ENCODE measurements at regions of chr19 and their contacts with region 1.

Region 1: GRCh38 chr19:50657712-50658440 is 8.6 kb downstream of the C19orf81 start:
- DNase-seq: peak; percentile 98 to 100 (median 100)
- H3K4me3 ChIP-seq: peak overlapping the region; percentile 50 to 85 (median 70)
- H3K27ac ChIP-seq: peak overlapping the region in 58 of 59 donors; percentile 26 to 95 (median 86)
- H3K27me3 ChIP-seq: no peaks in the 10 kb centered on the region
- CTCF ChIP-seq: peak in 5 of 56 donors; percentile 4 to 29 (median 20)

Region 2: DNA sequence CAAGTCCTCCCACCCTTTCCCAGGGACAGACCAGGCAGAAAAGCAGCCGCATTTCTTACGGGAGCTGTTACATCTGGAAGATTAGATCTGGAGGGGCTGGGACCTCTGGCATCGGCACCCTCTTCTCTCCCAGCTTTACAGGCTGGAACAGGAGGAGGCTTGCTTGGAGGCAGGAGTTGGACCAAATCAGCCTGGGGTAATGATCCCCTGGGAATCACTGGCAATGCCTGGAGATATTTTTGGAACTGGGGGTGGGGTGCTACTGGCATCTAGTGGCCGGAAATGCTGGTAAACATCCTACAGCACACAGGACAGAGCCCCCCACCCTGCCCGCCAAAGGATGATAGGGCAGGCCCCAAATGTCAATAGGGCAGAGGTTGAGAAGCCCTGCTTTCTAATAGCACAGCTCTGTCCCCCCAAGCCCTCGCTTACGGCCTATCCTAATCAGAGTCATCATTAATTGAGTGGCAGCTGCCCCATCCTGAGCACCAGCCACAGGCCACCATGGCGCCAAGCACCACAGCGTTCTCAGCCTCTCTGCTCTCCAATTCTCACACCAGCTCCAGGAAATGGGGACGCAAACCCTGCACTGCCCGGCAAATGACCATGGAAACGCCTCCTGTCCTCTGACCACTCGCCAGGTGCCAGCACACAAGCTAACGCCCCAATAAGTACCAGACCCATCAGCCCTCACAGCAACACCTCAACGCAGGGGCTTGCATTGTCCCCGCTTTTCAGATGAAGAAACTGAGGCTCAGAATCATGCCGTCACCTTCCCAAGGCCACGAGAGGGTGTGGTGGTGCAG is 110.3 kb before region 1 on chr19:
- intact Hi-C with region 1: loop called in 1 of 2 experiments (anchors 5 kb)
- DNase-seq: peak in 1 of 10 donors; percentile 58
- H3K4me3 ChIP-seq: peak overlapping the region; percentile 23 to 87 (median 71)
- H3K27ac ChIP-seq: peak overlapping the region; percentile 65 to 99 (median 94)
- H3K27me3 ChIP-seq: no peaks in the 10 kb centered on the region
- CTCF ChIP-seq: peak in 48 of 56 donors; percentile 10 to 63 (median 38)

Region 3: GRCh38 chr19:50556282-50557008 is 101.4 kb before region 1 on chr19:
- intact Hi-C with region 1: loop called in 1 of 2 experiments (anchors 5 kb)
- DNase-seq: peak; percentile 85 to 91 (median 87)
- H3K4me3 ChIP-seq: peak overlapping the region; percentile 33 to 77 (median 60)
- H3K27ac ChIP-seq: peak overlapping the region in 55 of 59 donors; percentile 10 to 87 (median 75)
- H3K27me3 ChIP-seq: no peaks in the 10 kb centered on the region
- CTCF ChIP-seq: peak; percentile 70 to 98 (median 87)

Region 4: DNA sequence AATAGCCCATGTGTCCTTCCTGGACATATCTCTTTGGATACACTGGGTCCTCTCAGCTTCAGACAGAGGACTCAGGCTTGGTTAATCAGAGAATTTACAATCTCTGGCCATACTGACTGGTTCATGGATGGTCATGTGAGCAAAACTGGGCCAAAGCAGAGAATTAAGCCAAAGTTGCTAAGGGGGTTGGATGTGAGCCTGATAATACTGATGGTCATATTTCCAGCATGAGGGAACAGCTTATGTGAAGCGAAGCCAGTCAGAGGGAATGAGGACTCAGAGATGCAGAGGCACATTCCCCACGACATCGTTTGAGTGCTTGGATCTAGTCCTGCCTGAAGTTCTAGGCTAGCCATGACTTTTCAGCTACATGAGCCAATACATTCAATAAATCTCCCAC is 67.7 kb before region 1 on chr19:
- intact Hi-C with region 1: no loop called
- DNase-seq: no peak
- H3K4me3 ChIP-seq: no peak overlapping the region
- H3K27ac ChIP-seq: no peak overlapping the region
- H3K27me3 ChIP-seq: no peaks in the 10 kb centered on the region
- CTCF ChIP-seq: no peak

Region 5: DNA sequence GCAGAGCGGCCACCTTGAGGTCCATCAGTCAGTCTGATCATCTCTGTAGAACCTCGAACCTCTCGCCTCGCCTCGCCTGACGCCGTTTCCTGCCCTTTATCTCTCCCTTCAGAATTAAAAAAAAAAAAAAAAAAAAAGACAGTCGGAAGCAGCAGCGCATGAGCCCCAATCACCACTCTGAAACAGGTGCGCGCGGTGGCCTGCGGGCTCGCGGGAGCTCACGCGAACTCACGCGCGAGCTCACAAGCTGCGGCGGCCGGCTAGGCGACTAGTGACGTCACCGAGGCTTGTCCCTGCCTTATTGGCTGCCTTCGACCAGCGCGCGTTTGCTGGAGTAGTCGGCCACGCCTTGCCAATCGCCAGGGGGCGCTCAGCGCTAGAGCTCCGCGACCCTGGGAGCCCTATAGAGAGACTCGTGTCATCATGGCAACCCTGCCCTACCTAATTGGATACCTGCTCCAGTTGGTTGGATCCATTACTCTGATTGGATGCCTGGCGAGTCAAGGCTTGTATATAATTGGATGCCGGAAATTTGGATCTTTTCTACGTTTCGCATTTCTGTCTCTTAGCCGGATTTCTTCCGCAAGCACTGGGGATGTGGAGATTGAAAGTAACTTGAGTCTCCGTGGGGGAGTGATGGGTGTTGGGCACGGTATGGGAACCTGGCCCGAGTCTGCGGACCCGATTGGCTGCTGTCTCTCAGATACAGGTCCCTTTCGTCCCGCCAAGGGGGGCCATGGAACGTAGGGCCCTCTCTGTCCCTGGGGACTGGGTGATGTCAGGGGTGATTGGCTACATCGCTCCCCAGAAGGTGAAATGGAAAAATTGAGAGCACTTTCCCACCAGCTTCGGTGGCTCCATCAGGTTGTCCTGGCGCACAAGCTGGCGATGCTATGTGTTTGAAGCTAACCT is 49.7 kb before region 1 on chr19:
- intact Hi-C with region 1: loop called (anchors 5 kb)
- DNase-seq: peak; percentile 92 to 99 (median 98)
- H3K4me3 ChIP-seq: peak overlapping the region in 56 of 59 donors; percentile 11 to 65 (median 46)
- H3K27ac ChIP-seq: peak overlapping the region in 44 of 59 donors; percentile 19 to 79 (median 61)
- H3K27me3 ChIP-seq: no peaks in the 10 kb centered on the region
- CTCF ChIP-seq: peak; percentile 42 to 94 (median 84)

Region 6: DNA sequence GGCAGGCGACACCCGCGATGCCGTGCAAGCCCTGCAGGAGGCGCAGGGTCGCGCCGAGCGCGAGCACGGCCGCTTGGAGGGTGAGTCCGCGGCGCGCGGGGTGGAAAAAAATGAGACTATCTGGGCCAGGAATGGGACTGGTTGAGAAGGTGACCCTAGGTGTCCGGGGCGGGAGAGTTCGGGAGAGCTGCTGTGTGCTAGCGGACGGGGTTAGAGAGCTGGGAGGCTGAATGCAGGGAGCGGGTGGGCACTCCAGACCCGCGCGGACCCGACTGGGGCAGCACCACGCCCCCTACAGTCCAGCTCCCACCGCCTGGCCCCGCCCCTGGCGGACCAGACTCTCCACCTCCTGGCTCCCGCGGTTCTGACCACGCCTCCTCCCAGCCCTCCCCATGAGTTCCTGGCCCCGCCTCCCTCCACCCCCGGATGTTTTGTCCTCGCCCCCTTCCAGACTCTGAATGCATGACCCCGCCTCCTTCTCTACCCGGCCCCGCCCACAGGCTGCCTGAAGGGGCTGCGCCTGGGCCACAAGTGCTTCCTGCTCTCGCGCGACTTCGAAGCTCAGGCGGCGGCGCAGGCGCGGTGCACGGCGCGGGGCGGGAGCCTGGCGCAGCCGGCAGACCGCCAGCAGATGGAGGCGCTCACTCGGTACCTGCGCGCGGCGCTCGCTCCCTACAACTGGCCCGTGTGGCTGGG is 66.8 kb after region 1 on chr19:
- intact Hi-C with region 1: loop called (anchors 2 kb)
- DNase-seq: peak; percentile 99 to 100 (median 99)
- H3K4me3 ChIP-seq: peak overlapping the region; percentile 60 to 93 (median 84)
- H3K27ac ChIP-seq: peak overlapping the region in 57 of 59 donors; percentile 41 to 90 (median 78)
- H3K27me3 ChIP-seq: no peaks in the 10 kb centered on the region
- CTCF ChIP-seq: peak; percentile 40 to 95 (median 72)

Region 7: DNA sequence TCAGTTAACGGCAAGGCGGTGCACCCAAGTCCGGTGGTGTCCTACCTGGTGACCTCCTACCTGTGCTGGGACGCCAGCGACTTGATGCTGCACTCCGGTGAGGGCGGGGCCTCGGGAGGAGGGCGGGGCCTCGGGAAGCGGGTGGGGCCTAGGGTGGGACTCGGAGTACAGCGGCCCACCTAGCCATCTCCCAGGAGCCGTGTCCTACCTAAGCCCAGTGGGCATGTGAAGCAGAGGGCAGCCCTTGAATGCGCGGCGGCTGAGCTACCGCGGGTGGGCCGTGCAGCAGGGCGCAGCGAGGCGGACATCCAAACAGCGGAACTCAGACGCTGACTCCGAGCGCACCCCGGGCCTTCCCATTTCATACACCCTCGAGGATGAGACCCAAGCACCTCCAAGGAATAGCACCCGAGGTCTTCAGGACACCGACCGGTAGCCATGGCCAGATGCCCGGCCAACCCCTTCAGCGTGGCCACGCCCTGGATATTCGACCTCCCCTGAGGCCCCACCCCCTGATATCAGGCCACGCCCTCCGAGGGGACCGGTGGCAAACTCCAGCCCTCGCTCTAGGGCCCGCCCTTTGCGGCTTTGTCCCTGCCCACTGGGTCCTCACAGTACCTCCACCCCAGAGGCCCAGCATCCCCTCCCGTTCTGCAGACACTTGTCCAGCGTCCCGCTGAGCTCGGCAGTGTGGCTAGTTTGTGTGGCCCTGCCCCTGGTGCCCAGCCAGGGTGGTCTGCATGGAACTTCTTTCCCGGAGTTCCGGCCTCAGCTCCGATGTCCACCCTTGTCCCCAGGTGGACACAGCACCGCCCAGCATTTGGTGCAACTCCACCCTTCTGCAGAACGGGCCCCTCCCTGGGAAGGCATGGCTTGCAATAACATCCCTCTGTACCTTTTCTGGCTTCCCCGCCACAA is 160.3 kb after region 1 on chr19:
- intact Hi-C with region 1: no loop called
- DNase-seq: no peak
- H3K4me3 ChIP-seq: peak overlapping the region in 27 of 59 donors; percentile 2 to 55 (median 24)
- H3K27ac ChIP-seq: no peak overlapping the region
- H3K27me3 ChIP-seq: peaks cover 0 to 74% (median 51%) of the 10 kb centered on the region in 45 donors
- CTCF ChIP-seq: no peak